ENCODE measurements at regions of chr14 and their contacts with region 1.

Region 1: DNA sequence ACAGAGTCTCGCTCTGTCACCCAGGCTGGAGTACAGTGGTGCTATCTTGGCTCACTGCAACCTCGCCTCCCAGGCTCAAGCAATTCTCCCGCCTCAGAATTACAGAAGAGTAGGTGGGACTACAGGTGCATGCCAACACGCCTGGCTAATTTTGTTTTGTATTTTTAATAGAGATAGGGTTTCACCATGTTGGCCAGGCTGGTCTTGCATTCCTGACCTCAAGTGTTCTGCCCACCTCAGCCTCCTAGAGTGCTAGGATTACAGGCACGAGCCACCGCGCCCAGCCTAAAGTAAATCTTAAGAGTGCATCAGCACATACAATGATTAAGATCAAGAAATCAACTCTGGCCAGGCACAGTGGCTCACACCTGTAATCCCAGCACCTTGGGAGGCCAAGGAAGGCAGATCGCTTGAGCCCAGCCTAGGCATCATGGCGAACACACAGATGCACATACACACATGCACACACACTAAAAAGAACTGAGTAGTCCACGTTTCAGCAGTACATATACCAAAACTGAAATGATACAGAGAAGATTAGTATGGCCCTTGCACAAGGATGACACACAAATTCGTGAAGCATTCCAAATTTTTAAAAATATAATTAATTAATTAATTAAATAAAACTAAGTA is 65.0 kb downstream of the HECTD1 start:
- H3K4me3 Mint-ChIP-seq: no peak overlapping the region
- H3K27ac Mint-ChIP-seq: no peak overlapping the region
- H3K4me1 Mint-ChIP-seq: no peaks in the 10 kb centered on the region
- H3K27me3 Mint-ChIP-seq: no peaks in the 10 kb centered on the region

Region 2: DNA sequence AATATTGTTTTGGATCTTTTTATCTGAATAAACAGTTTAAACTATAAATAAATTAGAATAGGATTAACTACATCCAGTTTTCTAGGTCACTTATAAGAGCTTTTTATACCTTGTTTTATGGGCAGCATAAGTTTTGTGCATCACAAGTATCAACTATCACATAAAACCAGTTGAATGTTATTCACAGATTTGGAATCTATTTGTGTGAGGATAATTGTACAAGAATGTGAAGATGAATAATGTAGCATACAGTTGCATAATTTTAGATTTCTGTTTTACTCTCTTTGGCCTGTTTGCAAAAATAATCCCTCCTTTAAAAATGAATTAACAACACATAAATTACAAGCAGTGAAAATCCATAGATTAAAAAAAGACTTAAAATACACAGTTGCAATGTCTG is 431.7 kb before region 1 on chr14:
- intact Hi-C with region 1: loop called (anchors 10 kb)
- H3K4me3 Mint-ChIP-seq: no peak overlapping the region
- H3K27ac Mint-ChIP-seq: no peak overlapping the region
- H3K4me1 Mint-ChIP-seq: no peaks in the 10 kb centered on the region
- H3K27me3 Mint-ChIP-seq: no peaks in the 10 kb centered on the region

Region 3: GRCh38 chr14:30982533-30982932 is 160.0 kb before region 1 on chr14:
- intact Hi-C with region 1: no loop called
- H3K4me3 Mint-ChIP-seq: no peak overlapping the region
- H3K27ac Mint-ChIP-seq: no peak overlapping the region
- H3K4me1 Mint-ChIP-seq: peaks cover under 1% of the 10 kb centered on the region
- H3K27me3 Mint-ChIP-seq: no peaks in the 10 kb centered on the region

Region 4: GRCh38 chr14:31090883-31091764 is 51.4 kb before region 1 on chr14:
- intact Hi-C with region 1: no loop called
- H3K4me3 Mint-ChIP-seq: no peak overlapping the region
- H3K27ac Mint-ChIP-seq: peak overlapping the region; percentile 59
- H3K4me1 Mint-ChIP-seq: peaks cover 24% of the 10 kb centered on the region
- H3K27me3 Mint-ChIP-seq: no peaks in the 10 kb centered on the region

Region 5: DNA sequence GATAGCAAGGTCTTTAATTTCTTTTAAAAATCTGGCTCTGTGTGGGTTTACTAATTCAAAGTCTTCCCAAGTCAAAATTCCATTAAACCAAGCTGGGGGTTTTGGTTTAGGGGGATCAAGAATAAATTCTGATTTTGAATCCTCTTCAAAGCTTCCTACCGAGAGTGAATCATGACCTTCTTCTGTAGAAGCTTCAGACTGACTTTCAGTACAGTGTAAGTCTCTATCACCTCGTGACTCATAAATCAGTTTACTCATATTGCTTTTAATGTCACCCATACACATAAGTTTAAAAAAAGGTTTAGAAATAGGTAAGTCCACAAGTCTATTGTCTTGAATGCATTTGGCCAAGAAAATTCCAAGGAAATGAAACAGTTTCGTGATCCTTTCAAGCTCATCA is 35.8 kb before region 1 on chr14:
- intact Hi-C with region 1: loop called (anchors 5 kb)
- H3K4me3 Mint-ChIP-seq: no peak overlapping the region
- H3K27ac Mint-ChIP-seq: no peak overlapping the region
- H3K4me1 Mint-ChIP-seq: no peaks in the 10 kb centered on the region
- H3K27me3 Mint-ChIP-seq: no peaks in the 10 kb centered on the region

Measured in dendritic cell treated with granulocyte-macrophage colony-stimulating factor and Interleukin-4, amounts not matched to agents 40 ng/mL and 50 ng/mL, for 4 days (primary cell).